ENCODE measurements at regions of chr1 and their contacts with region 1.

Region 1: GRCh38 chr1:160777486-160778089 is 18.4 kb upstream of the LY9 start:
- DNase-seq: peak in 10 of 14 experiments; percentile 22 to 83 (median 44)
- ATAC-seq: peak; percentile 83
- H3K4me3 ChIP-seq: no peak overlapping the region
- H3K4me3 Mint-ChIP-seq: no peak overlapping the region
- H3K27ac ChIP-seq: no peak overlapping the region
- H3K27ac Mint-ChIP-seq: no peak overlapping the region
- H3K4me1 ChIP-seq: peaks cover 31% of the 10 kb centered on the region
- H3K4me1 Mint-ChIP-seq: peaks cover 24% of the 10 kb centered on the region
- H3K27me3 ChIP-seq: no peaks in the 10 kb centered on the region
- H3K27me3 Mint-ChIP-seq: no peaks in the 10 kb centered on the region
- CTCF ChIP-seq: peak; percentile 72

Region 2: DNA sequence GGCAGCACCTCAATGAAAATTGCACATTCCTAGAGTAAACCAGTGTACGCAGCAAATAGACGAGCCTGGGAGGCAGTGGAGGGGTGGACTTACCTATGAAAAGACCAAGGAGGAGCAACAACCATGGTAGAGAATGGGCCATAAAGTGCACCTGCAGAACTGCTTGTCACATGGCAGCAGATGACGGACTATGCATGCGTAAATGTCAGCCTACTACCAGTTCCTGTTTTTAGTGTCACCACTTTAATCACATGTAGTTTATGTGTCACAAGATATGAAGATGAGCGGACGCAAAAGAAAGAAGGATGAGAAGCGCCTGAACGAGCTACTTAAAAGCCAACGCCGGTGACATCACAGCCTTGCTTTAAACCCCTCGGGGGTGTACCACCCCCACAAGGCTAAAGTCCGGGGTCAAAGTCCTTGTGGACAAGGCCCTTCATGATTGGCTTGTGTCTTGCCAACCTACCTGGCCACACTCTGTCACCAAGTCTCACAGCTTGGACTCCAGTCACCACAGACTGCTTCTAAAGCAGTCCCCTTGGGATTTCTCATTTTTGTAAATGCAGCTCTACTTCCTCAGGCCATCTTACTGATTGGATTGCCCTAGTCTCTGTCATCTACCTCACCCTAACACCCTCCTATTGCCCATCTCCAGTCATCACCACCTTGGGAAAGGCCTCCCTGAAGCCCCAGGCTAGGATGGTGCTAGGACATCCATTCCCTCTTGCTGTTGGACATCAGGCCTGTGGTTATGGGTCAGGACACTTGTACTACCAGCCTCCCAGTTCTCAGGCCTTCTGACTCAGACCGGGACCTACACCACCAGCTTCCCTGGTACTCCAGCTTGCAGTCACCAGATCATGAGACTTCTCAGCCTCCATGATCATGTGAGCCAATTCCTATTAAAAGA is 12.4 kb after region 1 on chr1:
- CTCF ChIA-PET with region 1: interaction called, 7 read pairs
- POLR2A ChIA-PET with region 1: interaction called, 23 read pairs
- intact Hi-C with region 1: loop called in 1 of 2 experiments (anchors 2 kb)
- DNase-seq: peak in 2 of 14 experiments; percentile 51 to 59
- ATAC-seq: peak; percentile 21
- H3K4me3 ChIP-seq: no peak overlapping the region
- H3K4me3 Mint-ChIP-seq: no peak overlapping the region
- H3K27ac ChIP-seq: no peak overlapping the region
- H3K27ac Mint-ChIP-seq: no peak overlapping the region
- H3K4me1 ChIP-seq: peaks cover 1% of the 10 kb centered on the region
- H3K4me1 Mint-ChIP-seq: peaks cover 18% of the 10 kb centered on the region
- H3K27me3 ChIP-seq: no peaks in the 10 kb centered on the region
- H3K27me3 Mint-ChIP-seq: no peaks in the 10 kb centered on the region
- CTCF ChIP-seq: no peak

Region 3: GRCh38 chr1:160813215-160813614 is 35.6 kb after region 1 on chr1:
- CTCF ChIA-PET with region 1: interaction called, 3 read pairs
- POLR2A ChIA-PET with region 1: interaction called, 7 read pairs
- intact Hi-C with region 1: loop called in 1 of 2 experiments (anchors 5 kb)
- DNase-seq: peak in 3 of 14 experiments; percentile 26 to 50 (median 38)
- ATAC-seq: peak; percentile 65
- H3K4me3 ChIP-seq: no peak overlapping the region
- H3K4me3 Mint-ChIP-seq: no peak overlapping the region
- H3K27ac ChIP-seq: no peak overlapping the region
- H3K27ac Mint-ChIP-seq: peak overlapping the region; percentile 71
- H3K4me1 ChIP-seq: peaks cover 20% of the 10 kb centered on the region
- H3K4me1 Mint-ChIP-seq: peaks cover 52% of the 10 kb centered on the region
- H3K27me3 ChIP-seq: no peaks in the 10 kb centered on the region
- H3K27me3 Mint-ChIP-seq: no peaks in the 10 kb centered on the region
- CTCF ChIP-seq: no peak

Region 4: GRCh38 chr1:160877221-160877620 is 99.6 kb after region 1 on chr1:
- CTCF ChIA-PET with region 1: no interaction called
- POLR2A ChIA-PET with region 1: interaction called, 4 read pairs
- intact Hi-C with region 1: loop called in 1 of 2 experiments (anchors 5 kb)
- DNase-seq: peak in 4 of 14 experiments; percentile 15 to 71 (median 70)
- ATAC-seq: peak; percentile 84
- H3K4me3 ChIP-seq: no peak overlapping the region
- H3K4me3 Mint-ChIP-seq: no peak overlapping the region
- H3K27ac ChIP-seq: no peak overlapping the region
- H3K27ac Mint-ChIP-seq: no peak overlapping the region
- H3K4me1 ChIP-seq: peaks cover 12% of the 10 kb centered on the region
- H3K4me1 Mint-ChIP-seq: peaks cover 13% of the 10 kb centered on the region
- H3K27me3 ChIP-seq: no peaks in the 10 kb centered on the region
- H3K27me3 Mint-ChIP-seq: no peaks in the 10 kb centered on the region
- CTCF ChIP-seq: peak; percentile 63

Region 5: DNA sequence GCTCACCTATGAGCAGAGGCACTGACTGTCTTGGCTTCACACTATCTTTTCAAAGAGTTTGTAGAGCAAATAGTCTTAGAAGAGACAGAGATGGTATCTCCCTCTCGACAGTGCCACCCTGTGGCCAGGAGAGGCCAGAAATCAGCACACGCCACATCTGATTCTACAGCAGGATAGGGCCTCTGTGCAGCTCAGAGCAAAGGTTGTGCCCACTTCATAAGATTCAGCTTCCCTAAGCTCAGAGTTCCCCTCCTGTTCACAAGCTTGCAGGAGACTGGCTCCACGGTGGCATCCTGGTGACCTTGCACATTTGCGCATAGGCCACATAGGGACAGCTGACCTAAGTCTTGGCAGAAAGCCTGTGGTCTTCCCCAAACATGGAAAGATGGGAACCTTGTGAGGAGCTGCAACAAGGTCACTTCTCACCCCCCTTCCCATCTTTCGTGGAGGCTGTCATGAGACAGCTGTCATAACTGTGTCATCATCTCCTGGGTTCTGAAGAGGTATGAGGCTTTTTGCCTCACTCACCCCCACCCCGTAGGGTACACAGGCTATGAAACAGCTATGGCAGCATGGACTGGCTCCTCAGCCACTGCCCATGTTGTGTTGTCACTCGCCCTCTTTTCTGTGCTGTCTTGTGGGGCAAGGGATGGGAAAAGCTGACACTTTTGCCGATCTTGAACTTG is 174.0 kb after region 1 on chr1:
- CTCF ChIA-PET with region 1: interaction called, 9 read pairs
- POLR2A ChIA-PET with region 1: interaction called, 3 read pairs
- intact Hi-C with region 1: loop called (anchors 2 to 5 kb)
- DNase-seq: peak; percentile 52 to 84 (median 66)
- ATAC-seq: peak; percentile 91
- H3K4me3 ChIP-seq: no peak overlapping the region
- H3K4me3 Mint-ChIP-seq: no peak overlapping the region
- H3K27ac ChIP-seq: no peak overlapping the region
- H3K27ac Mint-ChIP-seq: no peak overlapping the region
- H3K4me1 ChIP-seq: peaks cover 10% of the 10 kb centered on the region
- H3K4me1 Mint-ChIP-seq: peaks cover 12% of the 10 kb centered on the region
- H3K27me3 ChIP-seq: no peaks in the 10 kb centered on the region
- H3K27me3 Mint-ChIP-seq: no peaks in the 10 kb centered on the region
- CTCF ChIP-seq: peak; percentile 68

Region 6: GRCh38 chr1:161139765-161140164 is 362.2 kb after region 1 on chr1:
- CTCF ChIA-PET with region 1: no interaction called
- POLR2A ChIA-PET with region 1: no interaction called
- intact Hi-C with region 1: no loop called
- DNase-seq: peak in 8 of 14 experiments; percentile 26 to 73 (median 50)
- ATAC-seq: peak; percentile 72
- H3K4me3 ChIP-seq: no peak overlapping the region
- H3K4me3 Mint-ChIP-seq: no peak overlapping the region
- H3K27ac ChIP-seq: no peak overlapping the region
- H3K27ac Mint-ChIP-seq: no peak overlapping the region
- H3K4me1 ChIP-seq: peaks cover 2% of the 10 kb centered on the region
- H3K4me1 Mint-ChIP-seq: peaks cover 6% of the 10 kb centered on the region
- H3K27me3 ChIP-seq: no peaks in the 10 kb centered on the region
- H3K27me3 Mint-ChIP-seq: no peaks in the 10 kb centered on the region
- CTCF ChIP-seq: peak; percentile 67

Measured in CD4-positive, alpha-beta T cell (primary cell).